ENCODE measurements at regions of chr12 and their contacts with region 1.

Region 1: DNA sequence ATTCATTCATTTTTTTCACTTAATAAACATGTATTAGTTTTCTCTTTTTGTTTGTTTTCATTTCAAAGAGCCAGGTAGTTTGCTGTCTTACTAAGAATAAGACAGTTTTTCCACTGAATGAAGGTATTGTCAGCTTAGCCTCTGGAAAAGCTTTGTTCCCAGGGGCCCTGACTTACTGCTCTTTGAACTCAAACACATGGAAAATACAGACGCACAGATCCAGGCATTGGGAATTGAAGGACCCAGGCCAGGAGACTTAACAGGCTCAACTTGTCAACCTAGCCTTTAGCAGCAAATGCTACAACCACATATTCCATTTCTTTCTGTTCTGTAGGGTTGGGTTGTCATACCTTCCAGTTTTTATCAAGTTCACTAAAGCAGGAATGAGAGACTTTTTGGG is 38.5 kb upstream of the SLCO1C1 start:
- DNase-seq: peak; percentile 94
- ATAC-seq: peak; percentile 100
- H3K4me3 ChIP-seq: peak overlapping the region in 2 of 3 experiments; percentile 7 to 26; a peak in 2 of 6 replicates
- H3K27ac ChIP-seq: peak overlapping the region; percentile 81
- H3K4me1 ChIP-seq: peaks cover 37% of the 10 kb centered on the region
- H3K27me3 ChIP-seq: no peaks in the 10 kb centered on the region
- CTCF ChIP-seq: no peak
- EP300 ChIP-seq: peak in 1 of 2 experiments; percentile 91; a peak in 2 of 4 replicates
- POLR2A ChIP-seq: peak in 1 of 2 experiments; percentile 27; a peak in 1 of 4 replicates
- RAD21 ChIP-seq: no peak

Region 2: GRCh38 chr12:20629414-20630156 is 27.0 kb before region 1 on chr12:
- CTCF ChIA-PET with region 1: no interaction called
- POLR2A ChIA-PET with region 1: interaction called, 9 read pairs
- in situ Hi-C with region 1: no loop called
- intact Hi-C with region 1: loop called (anchors 1 kb)
- DNase-seq: peak; percentile 84
- ATAC-seq: peak; percentile 89
- H3K4me3 ChIP-seq: peak overlapping the region; percentile 0 to 55 (median 37); a peak in 5 of 6 replicates
- H3K27ac ChIP-seq: peak overlapping the region; percentile 93
- H3K4me1 ChIP-seq: peaks cover 71% of the 10 kb centered on the region
- H3K27me3 ChIP-seq: no peaks in the 10 kb centered on the region
- CTCF ChIP-seq: no peak
- EP300 ChIP-seq: 0 out of 4 replicates have a peak, but pooled peaks of 1 of the 2 experiments have one; percentile 40
- POLR2A ChIP-seq: peak in 1 of 2 experiments; percentile 28; a peak in 1 of 4 replicates
- RAD21 ChIP-seq: no peak